ENCODE measurements at regions of chr4 and their contacts with region 1.

Region 1: GRCh38 chr4:103207673-103208072 is 9.5 kb upstream of the CENPE start:
- DNase-seq: no peak
- ATAC-seq: no peak
- H3K4me3 ChIP-seq: no peak overlapping the region
- H3K4me3 Mint-ChIP-seq: no peak overlapping the region
- H3K27ac ChIP-seq: no peak overlapping the region
- H3K27ac Mint-ChIP-seq: no peak overlapping the region
- H3K4me1 ChIP-seq: no peaks in the 10 kb centered on the region
- H3K4me1 Mint-ChIP-seq: no peaks in the 10 kb centered on the region
- H3K27me3 ChIP-seq: no peaks in the 10 kb centered on the region
- H3K27me3 Mint-ChIP-seq: peaks cover 17 to 19% of the 10 kb centered on the region in 2 donors
- CTCF ChIP-seq: no peak

Region 2: GRCh38 chr4:101981709-101982130 is 1226.0 kb before region 1 on chr4:
- intact Hi-C with region 1: loop called (anchors 5 kb)
- DNase-seq: no peak
- ATAC-seq: no peak
- H3K4me3 ChIP-seq: no peak overlapping the region
- H3K4me3 Mint-ChIP-seq: no peak overlapping the region
- H3K27ac ChIP-seq: no peak overlapping the region
- H3K27ac Mint-ChIP-seq: no peak overlapping the region
- H3K4me1 ChIP-seq: no peaks in the 10 kb centered on the region
- H3K4me1 Mint-ChIP-seq: no peaks in the 10 kb centered on the region
- H3K27me3 ChIP-seq: no peaks in the 10 kb centered on the region
- H3K27me3 Mint-ChIP-seq: no peaks in the 10 kb centered on the region
- CTCF ChIP-seq: no peak